MCF 10A (cell line): ENCODE measurements at regions of chr4 and their contacts with region 1.

Region 1: DNA sequence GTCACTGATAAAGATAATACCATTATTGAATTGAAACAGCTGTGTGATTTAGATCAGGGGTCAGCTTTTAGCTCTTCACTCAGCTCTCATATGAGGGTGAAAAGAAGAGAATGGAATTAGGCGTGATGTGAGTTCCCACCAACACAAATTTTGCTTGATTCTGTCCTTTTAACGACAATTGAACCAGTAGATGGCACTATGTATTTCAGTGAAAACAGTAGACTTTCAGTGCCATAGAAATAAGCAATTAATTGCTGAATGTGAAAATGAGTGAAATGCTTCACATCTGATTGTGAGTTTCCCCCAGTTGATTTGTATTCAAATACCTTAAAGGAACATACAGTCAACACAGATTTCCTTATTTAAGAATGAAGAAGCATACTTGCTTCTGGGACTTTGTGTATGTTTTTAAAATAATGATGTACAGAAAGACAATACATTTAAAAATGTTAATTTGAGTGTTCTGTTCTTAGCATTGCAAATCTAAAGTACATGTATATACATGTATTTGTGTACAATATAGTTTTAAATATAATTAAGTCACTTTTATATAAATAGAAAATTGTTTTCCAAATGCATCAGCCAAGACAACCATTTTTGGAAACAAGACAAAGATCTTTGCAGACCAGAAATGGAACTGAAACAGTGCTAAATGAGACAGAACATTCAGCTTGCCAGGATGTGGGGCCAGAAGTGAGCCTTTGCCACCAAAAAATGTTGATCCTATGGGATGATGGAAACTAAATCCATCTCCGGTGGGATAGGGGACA is 178.8 kb downstream of the SNCA start:
- DNase-seq: peak; percentile 53
- H3K4me3 Mint-ChIP-seq: no peak overlapping the region
- H3K27ac Mint-ChIP-seq: peak overlapping the region; percentile 16
- H3K4me1 Mint-ChIP-seq: peaks cover 33% of the 10 kb centered on the region
- H3K27me3 Mint-ChIP-seq: no peaks in the 10 kb centered on the region
- CTCF ChIP-seq: peak; percentile 38

Region 2: GRCh38 chr4:89482248-89482647 is 175.9 kb before region 1 on chr4:
- CTCF ChIA-PET with region 1: interaction called, 11 read pairs
- POLR2A ChIA-PET with region 1: no interaction called
- intact Hi-C with region 1: loop called (anchors 1 kb)
- DNase-seq: peak; percentile 76
- H3K4me3 Mint-ChIP-seq: no peak overlapping the region
- H3K27ac Mint-ChIP-seq: no peak overlapping the region
- H3K4me1 Mint-ChIP-seq: no peaks in the 10 kb centered on the region
- H3K27me3 Mint-ChIP-seq: no peaks in the 10 kb centered on the region
- CTCF ChIP-seq: peak; percentile 18

Region 3: DNA sequence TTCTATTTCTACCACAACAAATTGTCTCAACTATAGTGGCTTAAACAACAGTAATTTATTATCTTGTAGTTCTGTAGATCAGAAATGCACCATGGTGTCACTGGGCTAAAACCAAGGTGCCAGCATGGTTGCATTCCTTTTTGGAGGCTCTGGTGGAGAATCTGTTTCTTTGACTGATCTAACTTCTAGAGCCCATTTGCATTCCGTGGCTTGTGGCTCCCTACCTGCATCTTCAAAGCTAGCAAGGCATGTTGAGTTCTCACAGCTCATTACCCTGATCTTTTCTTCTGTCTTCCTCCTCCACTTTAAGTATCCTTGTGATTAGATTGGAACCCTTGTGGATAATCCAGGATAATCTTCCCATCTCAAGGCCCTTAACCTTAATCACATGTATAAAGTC is 30.8 kb after region 1 on chr4:
- CTCF ChIA-PET with region 1: interaction called, 10 read pairs
- POLR2A ChIA-PET with region 1: interaction called, 67 read pairs
- intact Hi-C with region 1: no loop called
- DNase-seq: no peak
- H3K4me3 Mint-ChIP-seq: no peak overlapping the region
- H3K27ac Mint-ChIP-seq: no peak overlapping the region
- H3K4me1 Mint-ChIP-seq: peaks cover 28% of the 10 kb centered on the region
- H3K27me3 Mint-ChIP-seq: no peaks in the 10 kb centered on the region
- CTCF ChIP-seq: no peak

Region 4: DNA sequence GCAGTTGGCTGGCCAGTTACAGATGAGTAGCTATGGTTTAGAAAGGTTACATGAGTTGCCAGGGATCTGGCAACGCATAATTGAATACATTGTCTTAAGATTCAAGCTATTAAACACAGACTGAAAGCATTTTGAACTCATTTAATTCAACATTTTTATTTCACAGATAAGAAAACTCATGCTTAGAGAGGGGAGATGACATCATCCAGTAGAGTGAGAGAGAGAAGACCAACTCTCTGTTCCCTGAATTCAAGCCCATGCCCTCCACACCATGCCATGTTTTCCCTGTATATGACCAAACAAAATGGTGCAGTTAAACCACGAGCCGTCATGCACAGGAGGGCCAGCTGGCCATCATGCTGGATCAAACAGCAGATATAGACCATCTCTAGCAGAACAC is 156.2 kb after region 1 on chr4:
- CTCF ChIA-PET with region 1: no interaction called
- POLR2A ChIA-PET with region 1: no interaction called
- intact Hi-C with region 1: no loop called
- DNase-seq: no peak
- H3K4me3 Mint-ChIP-seq: no peak overlapping the region
- H3K27ac Mint-ChIP-seq: no peak overlapping the region
- H3K4me1 Mint-ChIP-seq: no peaks in the 10 kb centered on the region
- H3K27me3 Mint-ChIP-seq: no peaks in the 10 kb centered on the region
- CTCF ChIP-seq: no peak

Region 5: DNA sequence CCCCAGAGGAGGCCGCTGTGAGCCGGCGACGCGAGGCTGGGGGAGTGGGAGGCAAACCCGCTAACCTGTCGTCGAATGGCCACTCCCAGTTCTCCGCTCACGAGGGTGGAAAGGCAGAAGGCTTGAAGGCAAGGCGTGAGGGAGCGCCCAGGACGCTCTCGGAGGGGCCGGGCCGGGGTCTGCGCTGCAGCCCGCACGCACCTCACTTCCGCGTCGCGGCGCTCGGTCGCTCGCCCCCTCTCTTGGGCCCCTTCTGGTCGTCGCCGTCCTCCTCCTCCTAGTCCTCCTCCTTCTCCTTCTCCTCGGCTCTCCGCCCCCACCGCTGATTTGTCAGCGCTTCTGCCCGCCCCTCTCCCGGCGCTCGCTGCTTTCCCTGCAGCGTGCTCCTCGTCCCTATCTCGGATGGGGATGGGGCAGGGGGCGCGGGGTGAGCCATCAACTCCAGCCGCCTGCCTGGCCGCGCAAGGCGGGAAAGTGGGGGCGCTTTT is 178.8 kb after region 1 on chr4 and contains the start of gene SNCA:
- CTCF ChIA-PET with region 1: interaction called, 3 read pairs
- POLR2A ChIA-PET with region 1: interaction called, 4 read pairs
- intact Hi-C with region 1: loop called (anchors 1 kb)
- DNase-seq: peak; percentile 84
- H3K4me3 Mint-ChIP-seq: peak within 1 kb of the TSS; percentile 89
- H3K27ac Mint-ChIP-seq: peak within 1 kb of the TSS; percentile 2
- H3K4me1 Mint-ChIP-seq: peaks cover 19% of the 10 kb centered on the region
- H3K27me3 Mint-ChIP-seq: no peaks in the 10 kb centered on the region
- CTCF ChIP-seq: no peak
- total RNA-seq, gene SNCA: 29.1 and 34.8 TPM in 2 replicates

Region 6: DNA sequence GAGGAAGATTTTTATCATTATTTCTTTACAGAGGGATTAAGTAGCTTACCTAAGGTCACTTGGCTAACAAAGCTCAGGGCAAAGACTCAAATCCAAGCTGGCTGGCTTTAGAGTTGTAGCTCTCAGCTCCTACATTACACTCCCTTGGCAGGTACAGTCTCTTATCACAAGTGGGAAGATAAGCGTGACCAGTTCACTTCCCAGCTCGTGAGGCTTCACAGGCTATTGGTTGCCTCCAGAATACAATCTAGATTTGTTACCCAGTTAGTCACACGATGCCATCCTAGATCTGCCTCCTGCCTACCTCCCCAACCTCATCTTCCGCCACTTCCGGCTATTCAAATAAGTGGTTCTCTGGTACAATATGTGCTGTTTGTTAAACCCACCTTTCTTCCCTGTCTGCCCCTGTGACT is 240.2 kb after region 1 on chr4:
- CTCF ChIA-PET with region 1: interaction called, 13 read pairs
- POLR2A ChIA-PET with region 1: interaction called, 3 read pairs
- intact Hi-C with region 1: loop called (anchors 1 kb)
- DNase-seq: no peak
- H3K4me3 Mint-ChIP-seq: no peak overlapping the region
- H3K27ac Mint-ChIP-seq: no peak overlapping the region
- H3K4me1 Mint-ChIP-seq: no peaks in the 10 kb centered on the region
- H3K27me3 Mint-ChIP-seq: no peaks in the 10 kb centered on the region
- CTCF ChIP-seq: no peak